ENCODE measurements at regions of chr3 and their contacts with region 1.

Region 1: GRCh38 chr3:9302425-9303181 is 53.2 kb upstream of the SRGAP3 start:
- DNase-seq: peak; percentile 81
- H3K4me3 Mint-ChIP-seq: no peak overlapping the region
- H3K27ac Mint-ChIP-seq: no peak overlapping the region
- H3K4me1 Mint-ChIP-seq: peaks cover 16% of the 10 kb centered on the region
- H3K27me3 Mint-ChIP-seq: peaks cover 4% of the 10 kb centered on the region

Region 2: GRCh38 chr3:8776406-8776805 is 526.2 kb before region 1 on chr3:
- CTCF ChIA-PET with region 1: no interaction called
- intact Hi-C with region 1: no loop called
- DNase-seq: no peak
- H3K4me3 Mint-ChIP-seq: no peak overlapping the region
- H3K27ac Mint-ChIP-seq: no peak overlapping the region
- H3K4me1 Mint-ChIP-seq: no peaks in the 10 kb centered on the region
- H3K27me3 Mint-ChIP-seq: peaks cover 24% of the 10 kb centered on the region

Region 3: GRCh38 chr3:8970971-8971589 is 331.5 kb before region 1 on chr3:
- CTCF ChIA-PET with region 1: interaction called, 56 read pairs
- intact Hi-C with region 1: loop called (anchors 1 kb)
- DNase-seq: peak; percentile 85
- H3K4me3 Mint-ChIP-seq: no peak overlapping the region
- H3K27ac Mint-ChIP-seq: no peak overlapping the region
- H3K4me1 Mint-ChIP-seq: peaks cover 2% of the 10 kb centered on the region
- H3K27me3 Mint-ChIP-seq: no peaks in the 10 kb centered on the region

Region 4: DNA sequence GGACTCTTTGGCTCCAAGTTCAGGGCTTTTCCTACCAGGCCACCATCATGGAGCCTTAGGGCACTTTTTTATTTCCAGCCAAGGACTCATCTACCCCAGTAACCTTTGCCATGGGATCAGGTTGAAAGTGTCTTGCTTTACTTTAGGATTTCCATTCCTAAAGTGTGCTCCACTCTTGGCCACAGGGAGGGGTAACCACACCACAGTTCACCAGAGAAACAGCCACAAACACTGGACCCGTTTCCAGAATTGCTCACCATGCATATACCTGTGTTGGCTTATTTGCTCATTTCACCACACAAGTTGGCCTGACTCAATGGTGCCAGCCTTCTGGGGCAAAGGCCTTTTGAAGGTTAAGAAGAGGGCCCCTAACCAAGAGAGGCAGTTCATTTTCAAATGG is 268.7 kb before region 1 on chr3:
- CTCF ChIA-PET with region 1: interaction called, 4 read pairs
- intact Hi-C with region 1: loop called (anchors 2 kb)
- DNase-seq: peak; percentile 16
- H3K4me3 Mint-ChIP-seq: no peak overlapping the region
- H3K27ac Mint-ChIP-seq: no peak overlapping the region
- H3K4me1 Mint-ChIP-seq: no peaks in the 10 kb centered on the region
- H3K27me3 Mint-ChIP-seq: no peaks in the 10 kb centered on the region

Region 5: GRCh38 chr3:9080163-9080562 is 222.4 kb before region 1 on chr3:
- CTCF ChIA-PET with region 1: interaction called, 5 read pairs
- intact Hi-C with region 1: loop called (anchors 5 kb)
- DNase-seq: peak; percentile 15
- H3K4me3 Mint-ChIP-seq: no peak overlapping the region
- H3K27ac Mint-ChIP-seq: no peak overlapping the region
- H3K4me1 Mint-ChIP-seq: peaks cover 8% of the 10 kb centered on the region
- H3K27me3 Mint-ChIP-seq: no peaks in the 10 kb centered on the region

Region 6: DNA sequence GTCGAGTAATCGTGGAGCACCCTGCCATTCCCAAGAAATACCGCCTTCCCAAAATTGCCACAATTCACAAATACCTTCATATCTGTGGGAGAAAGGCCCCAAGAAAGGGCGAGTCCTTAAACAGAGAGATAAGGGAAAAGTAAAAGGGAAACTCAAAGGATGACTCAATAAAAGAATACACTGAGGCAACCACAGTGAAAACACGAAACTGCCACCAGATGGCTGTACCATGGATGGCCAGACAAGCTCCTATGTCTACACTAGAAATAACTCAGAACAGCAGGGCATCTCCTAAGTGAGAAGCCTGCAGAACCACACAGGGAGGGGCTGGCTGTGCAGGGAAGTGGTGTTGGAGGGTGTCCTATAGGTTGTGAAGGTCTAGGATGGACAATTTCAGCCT is 78.1 kb before region 1 on chr3:
- CTCF ChIA-PET with region 1: interaction called, 15 read pairs
- intact Hi-C with region 1: loop called (anchors 2 kb)
- DNase-seq: peak; percentile 68
- H3K4me3 Mint-ChIP-seq: no peak overlapping the region
- H3K27ac Mint-ChIP-seq: peak overlapping the region; percentile 21
- H3K4me1 Mint-ChIP-seq: peaks cover 5% of the 10 kb centered on the region
- H3K27me3 Mint-ChIP-seq: no peaks in the 10 kb centered on the region

Region 7: GRCh38 chr3:9290566-9290965 is 12.0 kb before region 1 on chr3:
- CTCF ChIA-PET with region 1: interaction called, 10 read pairs
- intact Hi-C with region 1: no loop called
- DNase-seq: no peak
- H3K4me3 Mint-ChIP-seq: no peak overlapping the region
- H3K27ac Mint-ChIP-seq: no peak overlapping the region
- H3K4me1 Mint-ChIP-seq: no peaks in the 10 kb centered on the region
- H3K27me3 Mint-ChIP-seq: no peaks in the 10 kb centered on the region